K562 (cell line): ENCODE measurements at regions of chr22 and their contacts with region 1.

Region 1: GRCh38 chr22:19941365-19942082 is at the starts of genes COMT and TXNRD2:
- DNase-seq: peak; percentile 96 to 100 (median 100)
- ATAC-seq: peak; percentile 88
- H3K4me3 ChIP-seq: peak within 1 kb of the TSS; percentile 58
- H3K27ac ChIP-seq: peak within 1 kb of the TSS; percentile 88
- H3K4me1 ChIP-seq: peaks cover 35 to 37% of the 10 kb centered on the region in 2 experiments
- H3K27me3 ChIP-seq: no peaks in the 10 kb centered on the region; a peak in 1 of 5 replicates
- CTCF ChIP-seq: peak in 1 of 3 experiments; percentile 34; a peak in 3 of 6 replicates
- EP300 ChIP-seq: peak; percentile 21; the same call in 1 of the 2 replicates
- POLR2A ChIP-seq: no peak
- RAD21 ChIP-seq: no peak
- polyA plus RNA-seq, gene COMT: 12.5 to 39.6 TPM
- polyA plus RNA-seq, gene TXNRD2: 3.3 to 4.4 TPM

Region 2: GRCh38 chr22:19918332-19919106 is 23.0 kb before region 1 on chr22:
- CTCF ChIA-PET with region 1: no interaction called
- POLR2A ChIA-PET with region 1: interaction called, 23 read pairs
- in situ Hi-C with region 1: no loop called
- intact Hi-C with region 1: no loop called
- DNase-seq: peak; percentile 69 to 84 (median 72)
- ATAC-seq: peak; percentile 80
- H3K4me3 ChIP-seq: no peak overlapping the region
- H3K27ac ChIP-seq: no peak overlapping the region
- H3K4me1 ChIP-seq: peaks cover 0 to 26% of the 10 kb centered on the region in 2 experiments; a peak in 4 of 5 replicates
- H3K27me3 ChIP-seq: no peaks in the 10 kb centered on the region
- CTCF ChIP-seq: no peak
- EP300 ChIP-seq: no peak
- POLR2A ChIP-seq: no peak
- RAD21 ChIP-seq: no peak